MCF 10A (cell line): ENCODE measurements at regions of chr3 and their contacts with region 1.

Region 1: DNA sequence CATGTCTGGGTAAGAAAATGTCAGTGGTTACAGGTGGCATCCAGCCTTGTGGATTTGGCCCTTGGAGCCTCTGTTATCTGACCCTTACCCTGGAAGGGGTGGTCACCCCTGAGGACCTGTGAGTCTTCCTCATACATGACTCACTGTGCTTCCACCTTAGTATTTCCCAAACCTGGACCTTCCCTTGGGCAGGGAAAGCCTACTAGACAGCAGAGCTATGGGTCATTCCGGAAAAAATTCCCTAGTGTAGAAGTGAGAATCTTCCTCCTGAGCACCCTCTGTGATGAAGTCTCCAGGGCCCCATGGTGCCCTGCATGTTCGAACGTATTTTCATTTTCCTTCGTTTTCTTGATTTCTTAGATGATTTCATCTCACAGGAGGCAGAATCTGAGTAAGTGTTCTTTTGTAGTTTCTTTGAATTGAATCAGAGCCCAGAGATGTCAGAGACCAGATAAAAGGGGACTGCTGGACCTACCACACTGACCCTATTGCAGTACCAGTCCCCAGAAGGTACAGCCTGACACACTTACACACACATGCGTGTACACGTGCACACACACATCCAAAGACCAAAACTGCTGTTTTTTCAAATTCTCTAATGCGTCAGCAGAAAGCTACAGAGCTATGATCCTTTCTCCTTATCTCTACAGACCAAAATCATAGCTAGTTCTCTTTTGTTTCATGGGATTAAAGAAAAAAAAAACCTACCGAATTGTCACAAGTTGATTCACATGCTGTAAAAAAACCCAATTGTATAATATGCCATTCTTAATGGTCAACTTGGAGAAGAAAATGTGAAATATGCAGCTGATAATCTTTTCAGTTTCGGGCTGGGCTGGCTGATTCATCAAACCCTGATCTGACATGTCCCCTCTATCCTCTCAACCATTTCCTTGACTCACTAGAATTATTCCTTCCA is 50.5 kb upstream of the ARHGEF3 start:
- DNase-seq: peak; percentile 53
- H3K4me3 Mint-ChIP-seq: peak overlapping the region; percentile 46
- H3K27ac Mint-ChIP-seq: peak overlapping the region; percentile 68
- H3K4me1 Mint-ChIP-seq: peaks cover 23% of the 10 kb centered on the region
- H3K27me3 Mint-ChIP-seq: no peaks in the 10 kb centered on the region
- CTCF ChIP-seq: no peak

Region 2: DNA sequence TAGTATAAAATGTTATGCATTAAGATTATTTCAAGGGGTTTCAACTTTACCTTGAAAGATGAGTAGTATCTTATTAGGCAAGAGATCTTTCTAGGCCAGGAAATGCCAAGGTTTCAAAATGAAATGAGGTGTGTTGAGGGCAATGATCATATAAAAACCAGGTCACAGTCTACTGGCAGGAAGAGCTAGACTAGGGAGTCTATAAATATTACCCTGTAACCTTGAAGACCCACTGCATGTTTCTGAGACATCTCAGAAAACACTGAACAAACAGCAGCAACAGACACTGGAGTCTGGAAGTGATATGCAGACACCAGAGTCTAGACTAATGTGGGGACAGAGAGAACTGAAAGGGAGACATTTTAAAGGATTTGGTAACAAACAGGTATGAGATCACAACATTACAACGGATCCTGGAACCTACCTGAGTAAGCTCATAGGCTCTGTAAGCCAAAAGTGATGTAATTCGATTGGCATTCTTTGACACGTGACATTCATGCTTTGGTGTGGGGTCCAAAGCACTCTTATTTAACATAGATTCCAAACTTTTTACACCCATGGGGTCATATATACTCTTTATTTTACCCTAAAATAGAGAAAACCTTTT is 184.1 kb before region 1 on chr3:
- CTCF ChIA-PET with region 1: no interaction called
- POLR2A ChIA-PET with region 1: no interaction called
- intact Hi-C with region 1: no loop called
- DNase-seq: no peak
- H3K4me3 Mint-ChIP-seq: no peak overlapping the region
- H3K27ac Mint-ChIP-seq: peak overlapping the region; percentile 12
- H3K4me1 Mint-ChIP-seq: peaks cover 5% of the 10 kb centered on the region
- H3K27me3 Mint-ChIP-seq: no peaks in the 10 kb centered on the region
- CTCF ChIP-seq: no peak

Region 3: GRCh38 chr3:56839784-56840715 is 12.2 kb before region 1 on chr3:
- CTCF ChIA-PET with region 1: interaction called, 3 read pairs
- POLR2A ChIA-PET with region 1: interaction called, 12 read pairs
- intact Hi-C with region 1: no loop called
- DNase-seq: peak; percentile 55
- H3K4me3 Mint-ChIP-seq: no peak overlapping the region
- H3K27ac Mint-ChIP-seq: no peak overlapping the region
- H3K4me1 Mint-ChIP-seq: peaks cover 24% of the 10 kb centered on the region
- H3K27me3 Mint-ChIP-seq: no peaks in the 10 kb centered on the region
- CTCF ChIP-seq: no peak